ENCODE measurements at regions of chr4 and their contacts with region 1.

Region 1: DNA sequence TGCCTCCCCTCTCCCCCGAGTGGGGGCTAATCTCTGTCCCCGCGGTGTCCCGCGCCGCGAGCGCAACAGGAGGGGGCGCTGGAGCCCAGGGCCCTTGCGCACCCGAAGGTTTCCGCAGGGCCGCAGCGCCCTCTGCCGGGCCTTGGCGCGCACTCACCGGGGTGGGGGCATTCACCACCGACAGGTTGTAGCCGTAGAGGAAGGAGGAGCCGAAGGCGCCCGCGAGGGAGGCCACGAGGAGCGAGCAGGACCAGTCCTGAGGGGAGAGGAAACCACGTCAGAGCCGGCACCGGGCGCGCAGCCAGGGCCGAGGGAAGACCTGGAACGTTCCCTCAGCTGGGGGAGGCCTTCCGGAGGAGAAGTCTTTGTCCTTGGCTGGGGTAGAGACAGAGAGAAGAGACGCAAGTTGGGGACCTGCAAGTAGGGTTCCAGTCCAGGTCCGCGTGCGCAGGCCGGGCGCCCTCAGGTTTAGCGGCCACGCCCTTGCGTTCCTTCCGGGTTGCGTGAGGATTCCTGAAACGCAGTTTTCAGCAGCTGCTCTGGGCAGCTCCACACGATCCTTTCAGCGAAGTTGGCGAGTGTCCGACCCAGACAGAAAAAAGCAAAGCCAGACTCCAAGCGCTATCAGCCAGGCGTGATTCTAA is 2.4 kb downstream of the SLC2A9 start:
- DNase-seq: peak; percentile 99
- ATAC-seq: peak; percentile 97
- H3K4me3 ChIP-seq: peak overlapping the region in 1 of 2 donors; percentile 27
- H3K27ac ChIP-seq: peak overlapping the region; percentile 17 to 56
- H3K4me1 ChIP-seq: no peaks in the 10 kb centered on the region
- H3K27me3 ChIP-seq: no peaks in the 10 kb centered on the region

Region 2: GRCh38 chr4:9691238-9692065 is 327.5 kb before region 1 on chr4:
- intact Hi-C with region 1: loop called in 1 of 2 experiments (anchors 10 kb)
- DNase-seq: peak; percentile 98 to 99
- ATAC-seq: peak; percentile 100
- H3K4me3 ChIP-seq: peak overlapping the region; percentile 32 to 53
- H3K27ac ChIP-seq: peak overlapping the region in 1 of 2 donors; percentile 38
- H3K4me1 ChIP-seq: no peaks in the 10 kb centered on the region
- H3K27me3 ChIP-seq: no peaks in the 10 kb centered on the region

Region 3: DNA sequence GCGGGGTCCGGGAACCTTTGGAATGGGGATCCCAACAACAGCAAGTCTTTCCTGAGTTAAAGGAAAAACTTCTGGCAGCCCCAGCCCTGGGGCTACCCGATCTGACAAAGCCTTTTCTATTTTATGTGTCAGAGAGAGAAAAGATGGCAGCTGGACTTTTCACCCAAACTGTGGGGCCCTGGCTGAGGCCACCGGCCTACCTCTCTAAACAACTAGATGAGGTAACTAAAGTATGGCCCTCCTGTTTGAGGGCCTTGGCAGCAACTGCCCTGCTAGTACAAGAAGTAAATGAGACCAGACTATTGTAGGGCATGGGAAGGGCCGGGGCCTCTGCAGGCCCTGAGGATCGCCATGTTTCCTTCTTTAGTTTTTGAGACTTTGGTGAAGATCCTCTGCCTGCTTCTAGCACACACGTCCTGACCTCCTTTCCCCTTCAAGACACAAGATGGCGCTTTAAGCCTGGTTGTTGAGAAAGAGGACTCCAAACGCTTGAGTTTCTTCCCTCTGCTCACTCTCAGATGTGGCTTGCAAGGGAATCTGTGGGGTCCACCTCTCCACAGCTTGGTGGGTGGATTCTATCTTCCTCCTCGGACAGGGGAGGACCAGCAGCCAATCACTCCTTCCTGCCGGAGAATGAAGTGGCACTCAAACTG is 256.0 kb before region 1 on chr4:
- intact Hi-C with region 1: loop called (anchors 2 kb)
- DNase-seq: no peak
- ATAC-seq: no peak
- H3K4me3 ChIP-seq: no peak overlapping the region
- H3K27ac ChIP-seq: no peak overlapping the region
- H3K4me1 ChIP-seq: no peaks in the 10 kb centered on the region
- H3K27me3 ChIP-seq: peaks cover 0 to 1% of the 10 kb centered on the region in 2 donors

Region 4: GRCh38 chr4:9898596-9899305 is 120.2 kb before region 1 on chr4:
- intact Hi-C with region 1: loop called in 1 of 2 experiments (anchors 5 kb)
- DNase-seq: peak in 1 of 2 donors; percentile 61
- ATAC-seq: peak; percentile 72
- H3K4me3 ChIP-seq: no peak overlapping the region
- H3K27ac ChIP-seq: no peak overlapping the region
- H3K4me1 ChIP-seq: peaks cover 2 to 3% of the 10 kb centered on the region in 2 donors
- H3K27me3 ChIP-seq: no peaks in the 10 kb centered on the region

Region 5: GRCh38 chr4:10063544-10064300 is 44.8 kb after region 1 on chr4:
- intact Hi-C with region 1: loop called (anchors 2 to 5 kb)
- DNase-seq: peak; percentile 87 to 90
- ATAC-seq: peak; percentile 95
- H3K4me3 ChIP-seq: no peak overlapping the region
- H3K27ac ChIP-seq: no peak overlapping the region
- H3K4me1 ChIP-seq: no peaks in the 10 kb centered on the region
- H3K27me3 ChIP-seq: no peaks in the 10 kb centered on the region

Region 6: GRCh38 chr4:10116580-10117358 is 97.8 kb after region 1 on chr4 and contains the start of gene WDR1:
- intact Hi-C with region 1: loop called in 1 of 2 experiments (anchors 5 kb)
- DNase-seq: peak; percentile 99
- ATAC-seq: peak; percentile 97
- H3K4me3 ChIP-seq: peak within 1 kb of the TSS; percentile 94 to 96
- H3K27ac ChIP-seq: peak within 1 kb of the TSS; percentile 91 to 94
- H3K4me1 ChIP-seq: peaks cover 5% of the 10 kb centered on the region in 2 donors
- H3K27me3 ChIP-seq: no peaks in the 10 kb centered on the region
- total RNA-seq, gene WDR1: 339 to 593 TPM